ENCODE measurements at regions of chr3 and their contacts with region 1.

Region 1: DNA sequence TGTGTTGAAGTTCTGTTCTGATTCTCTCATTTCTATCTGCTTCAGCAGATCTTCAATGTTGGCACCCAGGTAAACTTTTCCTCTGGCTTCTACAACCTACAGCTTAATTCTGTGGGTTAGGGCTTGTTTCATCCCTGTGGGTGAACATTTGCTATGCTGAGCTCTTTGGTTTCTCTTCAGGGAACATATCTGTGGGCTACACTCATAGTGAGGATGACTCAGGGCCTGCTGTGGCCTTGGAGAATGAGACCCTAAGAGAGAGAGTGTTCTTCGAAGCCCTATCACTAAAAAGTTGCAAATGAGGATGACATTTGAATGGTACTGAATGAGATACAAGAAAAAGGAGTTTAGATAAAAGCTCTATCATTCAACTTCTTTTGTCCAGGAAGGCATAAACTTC is 346.2 kb upstream of the CBLB start:
- DNase-seq: peak; percentile 62
- ATAC-seq: peak; percentile 91
- H3K4me3 Mint-ChIP-seq: no peak overlapping the region
- H3K27ac Mint-ChIP-seq: peak overlapping the region; percentile 73
- H3K4me1 Mint-ChIP-seq: peaks cover 59% of the 10 kb centered on the region
- H3K27me3 Mint-ChIP-seq: no peaks in the 10 kb centered on the region

Region 2: GRCh38 chr3:106232956-106233355 is 17.9 kb after region 1 on chr3:
- CTCF ChIA-PET with region 1: interaction called, 3 read pairs
- POLR2A ChIA-PET with region 1: no interaction called
- intact Hi-C with region 1: loop called in 1 of 2 experiments (anchors 2 kb)
- DNase-seq: no peak
- ATAC-seq: no peak
- H3K4me3 Mint-ChIP-seq: no peak overlapping the region
- H3K27ac Mint-ChIP-seq: peak overlapping the region; percentile 52
- H3K4me1 Mint-ChIP-seq: peaks cover 46% of the 10 kb centered on the region
- H3K27me3 Mint-ChIP-seq: no peaks in the 10 kb centered on the region

Region 3: DNA sequence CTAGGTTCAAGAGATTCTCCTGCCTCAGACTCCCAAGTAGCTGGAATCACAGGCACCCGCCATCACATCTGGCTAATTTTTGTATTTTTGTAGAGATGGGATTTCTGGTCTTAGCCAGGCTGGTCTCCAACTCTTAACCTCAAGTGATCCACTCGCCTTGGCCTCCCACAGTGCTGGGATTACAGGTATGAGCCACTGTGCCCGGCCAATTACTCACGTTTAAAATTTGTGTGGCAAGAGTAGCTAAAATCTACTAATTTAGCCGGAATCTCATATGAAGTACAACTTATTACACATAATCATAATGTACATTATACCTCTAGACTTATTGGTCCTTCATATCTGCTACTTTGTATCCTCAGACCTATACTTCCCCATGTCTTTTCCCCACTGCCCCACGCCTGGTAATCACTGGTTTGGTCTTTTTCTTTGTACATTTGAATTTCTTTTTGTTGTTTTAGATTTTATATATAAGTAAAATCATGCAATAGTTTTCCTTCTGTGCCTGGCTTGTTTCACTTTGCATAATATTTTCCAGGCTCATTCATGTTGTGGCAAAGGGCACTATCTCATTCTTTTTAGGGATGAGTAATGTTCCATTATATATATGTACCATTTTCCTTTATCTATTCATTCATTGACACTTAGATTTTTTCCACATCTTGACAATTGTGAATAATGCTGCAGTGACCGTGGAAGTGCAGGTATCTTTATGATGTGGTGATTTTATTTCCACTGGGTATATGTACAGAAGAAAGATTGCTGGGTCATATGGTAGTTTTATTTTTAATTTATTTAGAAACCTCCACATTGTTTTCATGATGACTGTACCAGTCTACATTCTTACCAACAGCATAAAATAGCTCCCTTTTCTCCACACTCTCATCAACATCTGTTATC is 258.8 kb after region 1 on chr3:
- CTCF ChIA-PET with region 1: no interaction called
- POLR2A ChIA-PET with region 1: no interaction called
- intact Hi-C with region 1: loop called (anchors 5 kb)
- DNase-seq: peak; percentile 47
- ATAC-seq: peak; percentile 86
- H3K4me3 Mint-ChIP-seq: no peak overlapping the region
- H3K27ac Mint-ChIP-seq: peak overlapping the region; percentile 88
- H3K4me1 Mint-ChIP-seq: peaks cover 28% of the 10 kb centered on the region
- H3K27me3 Mint-ChIP-seq: no peaks in the 10 kb centered on the region